ENCODE measurements at regions of chr9 and their contacts with region 1.

Region 1: GRCh38 chr9:127715394-127716337 is at the starts of genes PTRH1 and TTC16:
- DNase-seq: peak; percentile 95
- H3K4me3 ChIP-seq: peak within 1 kb of the TSS; percentile 67 to 92 (median 88)
- H3K27ac ChIP-seq: peak within 1 kb of the TSS; percentile 85
- H3K4me1 ChIP-seq: peaks cover 14% of the 10 kb centered on the region
- H3K27me3 ChIP-seq: no peaks in the 10 kb centered on the region
- CTCF ChIP-seq: no peak
- total RNA-seq, gene PTRH1: 18.2 to 32.2 TPM
- total RNA-seq, gene TTC16: under 0.01 to 0.21 TPM

Region 2: GRCh38 chr9:127489471-127490115 is 226.1 kb before region 1 on chr9:
- CTCF ChIA-PET with region 1: no interaction called
- dilution Hi-C with region 1: no loop called
- in situ Hi-C with region 1: loop called in 1 of 2 experiments (anchors 25 kb)
- intact Hi-C with region 1: no loop called
- DNase-seq: no peak
- H3K4me3 ChIP-seq: no peak overlapping the region
- H3K27ac ChIP-seq: no peak overlapping the region
- H3K4me1 ChIP-seq: no peaks in the 10 kb centered on the region
- H3K27me3 ChIP-seq: no peaks in the 10 kb centered on the region
- CTCF ChIP-seq: no peak

Region 3: DNA sequence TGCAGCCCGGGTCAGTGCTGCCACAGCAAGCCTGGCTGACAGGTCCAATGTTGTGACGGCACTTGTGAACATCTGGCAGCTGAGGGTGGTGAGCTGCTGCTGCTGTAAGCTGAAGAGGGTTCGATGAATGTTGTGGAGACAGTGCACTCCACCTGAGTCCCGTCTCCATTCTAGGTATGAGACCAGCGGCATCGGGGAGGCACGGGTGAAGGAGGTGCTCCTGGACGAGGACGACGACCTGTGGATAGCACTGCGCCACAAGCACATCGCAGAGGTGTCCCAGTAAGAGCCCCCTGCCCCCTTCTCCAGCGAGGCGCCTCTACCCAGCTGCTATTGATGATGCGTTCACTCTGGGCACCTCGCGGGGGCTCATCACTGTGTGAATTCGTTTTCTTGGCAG is 47.8 kb before region 1 on chr9:
- CTCF ChIA-PET with region 1: no interaction called
- dilution Hi-C with region 1: no loop called
- in situ Hi-C with region 1: no loop called
- intact Hi-C with region 1: no loop called
- DNase-seq: no peak
- H3K4me3 ChIP-seq: no peak overlapping the region
- H3K27ac ChIP-seq: no peak overlapping the region
- H3K4me1 ChIP-seq: no peaks in the 10 kb centered on the region
- H3K27me3 ChIP-seq: no peaks in the 10 kb centered on the region
- CTCF ChIP-seq: no peak

Region 4: GRCh38 chr9:127684576-127684975 is 31.1 kb before region 1 on chr9:
- CTCF ChIA-PET with region 1: no interaction called
- dilution Hi-C with region 1: loop called (anchors 5 kb)
- in situ Hi-C with region 1: no loop called
- intact Hi-C with region 1: loop called (anchors 2 kb)
- DNase-seq: peak; percentile 24
- H3K4me3 ChIP-seq: no peak overlapping the region
- H3K27ac ChIP-seq: no peak overlapping the region
- H3K4me1 ChIP-seq: peaks cover 24% of the 10 kb centered on the region
- H3K27me3 ChIP-seq: no peaks in the 10 kb centered on the region
- CTCF ChIP-seq: no peak